ENCODE measurements at regions of chr15 and their contacts with region 1.

Region 1: GRCh38 chr15:85296615-85297402 is 83.6 kb upstream of the AKAP13 start:
- DNase-seq: no peak
- H3K4me3 ChIP-seq: peak overlapping the region; percentile 17; the same call in 1 of the 2 replicates
- H3K27me3 ChIP-seq: peaks cover under 1% of the 10 kb centered on the region
- CTCF ChIP-seq: peak; percentile 77

Region 2: DNA sequence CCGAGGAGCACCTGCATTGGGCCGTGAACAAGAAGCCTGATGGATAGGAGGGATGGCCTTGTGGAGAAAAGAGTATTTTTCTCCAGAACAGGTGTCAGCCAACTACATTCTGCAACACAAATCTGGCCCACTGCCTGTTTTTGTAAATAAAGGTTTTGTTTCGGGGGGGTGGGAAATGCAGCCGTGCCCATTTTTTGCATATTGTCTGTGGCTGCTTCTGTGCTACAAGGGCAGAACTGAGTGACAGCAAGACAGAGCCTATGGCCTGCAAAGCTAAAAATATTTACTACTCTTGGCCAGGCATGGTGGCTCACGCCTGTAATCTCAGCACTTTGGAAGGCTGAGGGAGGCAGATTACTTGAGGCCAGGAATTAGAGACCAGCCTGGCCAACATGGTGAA is 12.3 kb before region 1 on chr15:
- CTCF ChIA-PET with region 1: interaction called, 10 read pairs
- POLR2A ChIA-PET with region 1: no interaction called
- DNase-seq: no peak
- H3K4me3 ChIP-seq: no peak overlapping the region
- H3K27me3 ChIP-seq: peaks cover 2% of the 10 kb centered on the region; the same call in 1 of the 2 replicates
- CTCF ChIP-seq: no peak

Region 3: DNA sequence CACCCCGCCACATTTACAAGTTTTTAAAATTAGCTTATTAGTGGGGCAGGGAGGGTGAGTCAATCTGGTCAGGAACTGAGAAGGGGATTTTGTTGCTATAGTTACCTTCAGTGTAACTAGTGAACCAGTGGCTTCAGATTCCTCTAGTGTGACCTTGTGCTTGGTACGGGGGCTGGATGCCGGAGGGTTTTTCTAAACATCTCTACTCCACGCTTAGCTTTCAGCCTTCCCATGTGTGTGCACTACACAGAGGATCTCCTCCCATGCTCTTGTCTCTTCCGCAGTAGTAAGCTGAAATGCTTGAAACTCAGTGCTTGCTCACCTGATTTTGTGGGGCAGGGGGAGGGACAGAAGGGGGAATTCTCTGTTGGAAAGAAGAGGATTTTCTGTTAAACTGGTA is 15.7 kb after region 1 on chr15:
- CTCF ChIA-PET with region 1: interaction called, 26 read pairs
- POLR2A ChIA-PET with region 1: no interaction called
- DNase-seq: no peak
- H3K4me3 ChIP-seq: no peak overlapping the region
- H3K27me3 ChIP-seq: no peaks in the 10 kb centered on the region
- CTCF ChIP-seq: no peak

Region 4: DNA sequence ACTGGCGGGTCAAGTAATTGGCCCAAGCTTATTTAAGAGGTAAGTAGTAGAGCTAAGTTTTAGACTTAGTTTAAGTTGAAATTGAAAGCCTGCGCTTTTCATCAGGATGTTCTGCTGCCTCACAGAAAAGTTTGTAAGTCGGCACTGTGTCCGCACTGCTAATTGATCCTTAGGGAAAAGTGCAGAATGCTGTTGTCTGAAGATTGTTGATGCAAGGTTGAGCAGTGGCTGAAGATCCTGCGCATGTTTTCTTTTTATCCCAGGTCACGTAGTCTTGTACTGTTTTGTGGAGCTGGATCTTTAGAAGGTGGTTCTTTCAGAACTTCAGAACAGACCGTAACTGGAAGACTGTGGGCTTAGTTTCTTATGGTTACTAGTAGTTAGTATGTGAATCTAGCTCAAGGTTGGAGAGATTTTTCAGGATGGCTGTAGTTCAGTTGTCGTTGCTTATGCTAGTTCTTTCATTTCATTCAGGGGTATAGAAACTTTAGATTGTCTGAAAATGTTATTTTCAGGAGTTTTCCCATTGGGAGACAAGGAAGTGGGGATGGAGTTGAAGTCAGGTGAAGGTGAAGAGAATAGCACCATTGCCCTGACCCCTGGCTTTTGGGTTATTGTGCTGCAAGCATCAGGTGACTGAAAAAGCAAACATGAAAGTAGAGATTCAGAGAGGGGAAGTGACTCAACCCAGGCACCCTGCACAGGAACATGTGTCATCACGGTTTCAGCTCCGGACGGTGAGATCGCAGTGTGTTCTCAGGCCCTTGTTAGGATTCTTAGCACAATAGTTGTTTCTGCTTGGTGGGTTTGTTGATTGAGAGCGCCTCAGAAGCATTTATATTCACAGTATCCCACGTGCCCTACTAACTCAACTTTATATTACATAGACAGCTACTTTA is 116.4 kb after region 1 on chr15:
- CTCF ChIA-PET with region 1: interaction called, 50 read pairs
- POLR2A ChIA-PET with region 1: no interaction called
- DNase-seq: no peak
- H3K4me3 ChIP-seq: no peak overlapping the region
- H3K27me3 ChIP-seq: no peaks in the 10 kb centered on the region
- CTCF ChIP-seq: no peak

Region 5: DNA sequence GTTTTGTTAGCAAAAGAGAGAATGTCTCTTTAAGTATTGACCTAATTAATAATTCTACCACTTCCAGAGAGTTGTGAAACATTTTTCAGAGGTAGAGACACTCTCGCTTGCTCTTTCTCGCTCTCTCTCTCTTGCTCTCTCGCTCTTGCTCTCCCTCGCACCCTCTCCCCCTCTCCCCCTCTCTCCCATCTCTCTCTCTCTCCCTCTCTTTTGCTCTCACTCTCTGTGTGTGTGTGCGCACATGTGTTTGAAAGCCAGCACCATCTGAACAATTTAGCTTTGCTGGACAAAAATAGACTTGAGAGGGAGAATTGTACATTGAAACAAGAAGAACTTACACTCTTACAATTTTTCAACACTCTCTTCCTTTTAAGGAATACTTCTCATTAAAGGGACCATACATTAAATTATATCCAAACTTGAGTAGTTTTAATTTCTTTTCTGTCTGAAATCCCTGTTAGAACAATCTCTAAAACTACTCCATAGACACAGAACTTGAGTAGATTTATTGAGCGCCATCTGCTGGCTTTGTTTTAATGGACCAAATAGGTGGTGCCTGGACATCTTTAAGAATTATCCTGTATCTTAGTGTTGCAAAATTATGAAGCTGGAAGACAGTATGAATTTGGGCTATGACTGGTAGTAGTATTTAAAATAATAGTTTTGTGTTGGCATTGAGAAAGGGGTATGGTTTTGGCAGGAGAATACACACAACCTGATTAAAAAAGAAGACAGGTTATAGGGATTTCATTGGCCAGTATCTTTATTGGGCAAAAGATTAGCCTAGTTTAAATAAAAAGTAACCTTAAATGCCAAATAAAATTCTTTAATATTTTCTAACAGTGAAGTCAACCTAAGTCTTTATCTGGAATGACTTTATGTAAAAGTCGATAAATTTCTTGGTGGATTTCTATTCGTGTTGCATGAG is 208.2 kb after region 1 on chr15:
- CTCF ChIA-PET with region 1: interaction called, 20 read pairs
- POLR2A ChIA-PET with region 1: no interaction called
- DNase-seq: no peak
- H3K4me3 ChIP-seq: no peak overlapping the region
- H3K27me3 ChIP-seq: no peaks in the 10 kb centered on the region
- CTCF ChIP-seq: peak; percentile 66

Region 6: GRCh38 chr15:85730001-85730820 is 433.4 kb after region 1 on chr15:
- CTCF ChIA-PET with region 1: interaction called, 10 read pairs
- POLR2A ChIA-PET with region 1: no interaction called
- DNase-seq: no peak
- H3K4me3 ChIP-seq: no peak overlapping the region
- H3K27me3 ChIP-seq: no peaks in the 10 kb centered on the region
- CTCF ChIP-seq: peak; percentile 60

Measured in BJ (cell line).